K562 (cell line): ENCODE measurements at regions of chr2 and their contacts with region 1.

Region 1: DNA sequence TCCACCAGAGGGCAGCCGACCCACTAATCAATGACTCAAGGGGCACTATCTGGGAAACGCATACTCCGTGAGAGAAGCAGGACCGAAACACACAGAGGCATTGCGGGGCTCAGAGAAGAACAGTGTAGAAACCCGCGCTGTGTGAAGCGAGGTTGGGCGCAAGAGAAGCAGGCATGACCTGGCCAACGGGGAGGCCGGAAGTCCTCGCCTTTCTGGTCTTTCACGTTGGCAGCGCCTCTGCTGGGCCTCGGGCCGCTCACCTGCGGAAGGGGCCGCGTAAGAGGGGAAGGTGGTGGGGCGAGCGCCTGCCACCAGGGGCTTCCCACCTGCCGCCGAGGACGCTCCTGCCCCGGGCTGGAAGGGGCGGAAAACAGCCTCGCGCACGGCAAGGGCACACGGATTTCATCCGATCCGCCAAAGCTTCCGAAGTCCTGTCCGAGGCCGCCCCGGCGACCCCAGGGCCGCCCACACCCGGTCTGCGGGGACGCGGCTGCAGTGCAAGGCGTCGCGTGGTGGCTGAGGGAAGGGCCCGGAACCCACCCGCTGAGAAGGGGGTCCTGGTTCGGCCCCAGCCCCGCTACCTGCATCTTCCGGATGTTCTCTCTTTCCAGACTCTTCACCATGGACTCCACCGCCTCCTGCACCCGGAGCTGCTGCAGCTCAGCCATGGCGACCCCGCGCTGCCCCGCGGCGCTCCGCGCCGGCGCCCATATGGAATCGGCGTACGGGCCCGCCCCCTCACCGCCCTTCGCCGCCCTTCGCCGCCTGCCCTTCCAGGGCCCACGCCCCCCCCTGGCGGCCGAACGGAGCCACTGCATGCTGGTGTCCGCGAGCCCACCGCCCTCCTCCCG is at the start of gene FAM136A:
- DNase-seq: peak; percentile 91 to 96 (median 93)
- ATAC-seq: peak; percentile 96
- H3K4me3 ChIP-seq: peak within 1 kb of the TSS; percentile 55
- H3K27ac ChIP-seq: peak within 1 kb of the TSS; percentile 87
- H3K4me1 ChIP-seq: peaks cover 6 to 14% of the 10 kb centered on the region in 2 experiments; a peak in 4 of 5 replicates
- H3K27me3 ChIP-seq: peaks cover 0 to 5% of the 10 kb centered on the region in 2 experiments; a peak in 2 of 5 replicates
- CTCF ChIP-seq: peak; percentile 81 to 94 (median 89)
- EP300 ChIP-seq: no peak
- POLR2A ChIP-seq: peak; percentile 88
- RAD21 ChIP-seq: peak; percentile 62 to 77; a peak in 3 of 4 replicates
- polyA plus RNA-seq, gene FAM136A: 125 to 151 TPM

Region 2: DNA sequence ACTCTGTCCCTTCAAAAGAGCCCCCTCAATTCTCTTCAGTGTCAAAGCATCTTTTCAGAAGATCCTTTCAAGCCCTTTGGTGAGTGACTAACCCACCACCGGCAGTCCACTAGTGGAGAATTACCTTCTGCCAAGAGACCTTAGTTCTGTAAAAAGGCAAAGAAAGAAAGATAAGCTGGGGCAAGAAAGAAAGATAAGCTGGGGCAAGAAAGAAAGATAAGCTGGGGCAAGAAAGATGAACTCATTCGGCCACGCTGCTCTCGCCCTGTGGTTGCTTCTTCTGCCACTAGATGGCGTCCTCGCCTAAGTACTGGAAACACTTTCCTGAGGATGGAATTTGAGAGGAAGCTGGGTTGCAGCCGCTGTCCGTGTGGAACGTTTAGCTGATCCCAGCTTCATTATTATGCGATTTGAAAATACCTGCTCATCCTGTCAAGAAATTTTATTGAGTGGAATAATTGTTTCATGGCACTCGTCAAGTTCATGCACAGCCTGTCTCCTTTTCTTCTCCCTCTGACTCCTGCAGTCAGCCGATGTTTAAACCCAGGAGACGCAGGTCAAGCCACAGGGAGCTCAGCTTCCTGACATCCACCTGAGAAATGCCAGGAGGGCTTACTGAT is 576.9 kb before region 1 on chr2:
- CTCF ChIA-PET with region 1: no interaction called
- POLR2A ChIA-PET with region 1: no interaction called
- in situ Hi-C with region 1: no loop called
- intact Hi-C with region 1: loop called (anchors 10 kb)
- DNase-seq: peak; percentile 68 to 91 (median 73)
- ATAC-seq: peak; percentile 98
- H3K4me3 ChIP-seq: no peak overlapping the region
- H3K27ac ChIP-seq: no peak overlapping the region
- H3K4me1 ChIP-seq: peaks cover 6 to 7% of the 10 kb centered on the region in 2 experiments; a peak in 3 of 5 replicates
- H3K27me3 ChIP-seq: no peaks in the 10 kb centered on the region; a peak in 1 of 5 replicates
- CTCF ChIP-seq: peak; percentile 84 to 93 (median 93)
- EP300 ChIP-seq: peak; percentile 60
- POLR2A ChIP-seq: no peak
- RAD21 ChIP-seq: peak; percentile 97 to 99

Region 3: GRCh38 chr2:70199326-70199864 is 102.2 kb before region 1 on chr2:
- CTCF ChIA-PET with region 1: no interaction called
- POLR2A ChIA-PET with region 1: no interaction called
- in situ Hi-C with region 1: no loop called
- intact Hi-C with region 1: loop called (anchors 5 kb)
- DNase-seq: peak in 1 of 4 experiments; percentile 22
- ATAC-seq: peak; percentile 70
- H3K4me3 ChIP-seq: no peak overlapping the region
- H3K27ac ChIP-seq: no peak overlapping the region
- H3K4me1 ChIP-seq: no peaks in the 10 kb centered on the region
- H3K27me3 ChIP-seq: no peaks in the 10 kb centered on the region
- CTCF ChIP-seq: peak in 1 of 3 experiments; percentile 32; a peak in 2 of 6 replicates
- EP300 ChIP-seq: no peak
- POLR2A ChIP-seq: no peak
- RAD21 ChIP-seq: peak in 1 of 2 experiments; percentile 37; a peak in 1 of 4 replicates

Region 4: DNA sequence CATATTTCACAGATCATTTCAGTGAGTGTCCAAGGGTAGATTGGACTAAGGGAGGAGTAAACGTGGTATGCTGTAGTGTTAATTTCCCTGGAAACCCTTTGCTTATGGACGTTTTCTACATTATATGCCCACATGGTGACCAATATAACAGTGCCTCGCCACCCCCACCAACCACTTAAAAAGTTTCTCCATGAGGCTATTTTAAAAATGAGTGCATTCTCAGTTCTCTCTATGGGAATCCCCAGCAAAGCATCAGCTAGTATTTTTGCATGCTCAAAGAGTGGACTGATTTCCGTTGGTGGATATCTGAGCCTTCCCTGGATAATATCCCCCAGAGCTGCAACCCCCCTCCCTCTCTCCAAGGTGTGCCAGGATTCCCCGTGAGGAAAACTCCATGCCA is 178.9 kb after region 1 on chr2:
- CTCF ChIA-PET with region 1: no interaction called
- POLR2A ChIA-PET with region 1: no interaction called
- in situ Hi-C with region 1: no loop called
- intact Hi-C with region 1: no loop called
- DNase-seq: no peak
- ATAC-seq: no peak
- H3K4me3 ChIP-seq: no peak overlapping the region
- H3K27ac ChIP-seq: no peak overlapping the region
- H3K4me1 ChIP-seq: no peaks in the 10 kb centered on the region
- H3K27me3 ChIP-seq: no peaks in the 10 kb centered on the region; a peak in 1 of 5 replicates
- CTCF ChIP-seq: no peak
- EP300 ChIP-seq: no peak
- POLR2A ChIP-seq: no peak
- RAD21 ChIP-seq: no peak

Region 5: DNA sequence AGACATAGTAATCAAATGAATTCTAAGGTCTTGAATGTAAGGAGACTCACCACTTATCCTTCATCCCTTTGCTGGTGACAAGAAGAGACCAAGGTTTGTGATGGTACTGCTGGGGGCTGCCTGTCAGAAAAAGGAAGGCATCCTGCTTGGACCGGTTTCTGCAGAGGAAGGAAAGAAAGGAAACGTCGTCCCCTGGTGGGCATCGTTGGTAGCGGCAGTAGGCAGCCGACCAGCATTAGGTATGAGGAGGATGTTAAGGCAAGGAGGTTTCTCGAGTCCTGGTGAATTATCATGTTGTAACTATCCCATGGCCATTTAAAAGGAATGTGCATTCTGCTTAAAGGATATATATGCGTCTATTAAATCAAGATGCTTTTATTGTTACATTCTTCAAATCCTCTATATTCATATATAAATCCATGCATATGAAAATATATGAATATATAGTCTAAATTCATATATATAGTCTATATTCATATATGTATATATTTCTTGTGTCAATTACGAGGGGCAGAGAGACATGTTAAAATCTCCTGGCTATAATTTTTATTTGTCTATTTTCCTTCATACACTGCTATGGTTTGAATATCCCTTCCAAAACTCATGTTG is 346.4 kb after region 1 on chr2:
- CTCF ChIA-PET with region 1: interaction called, 8 read pairs
- POLR2A ChIA-PET with region 1: interaction called, 3 read pairs
- in situ Hi-C with region 1: no loop called
- intact Hi-C with region 1: loop called (anchors 1 kb)
- DNase-seq: peak; percentile 61 to 77 (median 70)
- ATAC-seq: peak; percentile 91
- H3K4me3 ChIP-seq: no peak overlapping the region
- H3K27ac ChIP-seq: no peak overlapping the region
- H3K4me1 ChIP-seq: no peaks in the 10 kb centered on the region
- H3K27me3 ChIP-seq: no peaks in the 10 kb centered on the region; a peak in 1 of 5 replicates
- CTCF ChIP-seq: peak; percentile 91 to 97 (median 94)
- EP300 ChIP-seq: no peak
- POLR2A ChIP-seq: no peak
- RAD21 ChIP-seq: peak; percentile 82 to 92

Region 6: DNA sequence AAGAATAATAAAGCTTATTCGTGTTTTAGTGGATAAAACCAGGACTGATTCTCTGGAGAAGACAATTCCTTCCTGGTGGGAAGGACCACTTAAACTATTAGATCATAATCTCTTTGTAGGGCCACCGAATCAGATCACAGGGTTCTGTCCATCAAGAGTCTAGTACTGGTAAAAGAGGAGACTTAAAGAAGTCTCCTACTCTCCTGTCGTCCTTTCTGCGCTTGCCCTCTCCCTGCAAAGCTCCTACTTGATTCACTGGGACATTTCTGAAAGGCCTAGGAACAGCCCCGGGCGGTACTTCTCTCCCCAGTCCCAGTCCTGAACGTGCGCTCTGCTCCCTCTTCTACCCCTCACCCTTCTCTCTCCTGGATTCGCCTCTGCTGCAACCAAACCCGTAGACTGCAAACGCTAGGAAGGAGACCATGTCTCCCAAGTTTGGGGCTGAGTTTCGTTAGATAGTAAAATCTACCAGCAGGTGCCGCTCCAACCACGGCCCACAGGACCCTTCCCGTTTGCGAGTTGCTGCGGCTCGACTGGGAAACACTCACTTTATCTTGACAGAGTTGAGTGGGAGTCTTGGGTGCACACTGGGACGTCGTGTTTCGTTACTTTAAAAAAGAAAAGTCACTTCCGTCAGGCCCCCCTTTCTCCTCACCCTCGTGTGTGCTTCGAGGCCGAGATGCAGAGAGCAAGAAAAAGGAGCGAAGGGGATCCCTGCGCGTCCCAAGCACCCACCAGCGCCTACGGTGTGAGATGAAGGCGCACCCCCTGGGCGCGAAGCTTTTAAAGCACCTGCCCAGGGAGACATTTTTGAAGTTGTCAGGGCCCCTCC is 488.0 kb after region 1 on chr2:
- CTCF ChIA-PET with region 1: interaction called, 3 read pairs
- POLR2A ChIA-PET with region 1: no interaction called
- in situ Hi-C with region 1: loop called (anchors 25 kb)
- intact Hi-C with region 1: loop called (anchors 5 kb)
- DNase-seq: peak; percentile 52 to 78 (median 62)
- ATAC-seq: peak; percentile 90
- H3K4me3 ChIP-seq: no peak overlapping the region
- H3K27ac ChIP-seq: no peak overlapping the region
- H3K4me1 ChIP-seq: peaks cover 0 to 10% of the 10 kb centered on the region in 2 experiments; a peak in 3 of 5 replicates
- H3K27me3 ChIP-seq: peaks cover 6 to 16% of the 10 kb centered on the region in 2 experiments
- CTCF ChIP-seq: peak; percentile 86 to 87 (median 86)
- EP300 ChIP-seq: no peak
- POLR2A ChIP-seq: no peak
- RAD21 ChIP-seq: peak; percentile 53 to 77